Naive thymus-derived CD4-positive, alpha-beta T cell (primary cell): ENCODE measurements at regions of chr3 and their contacts with region 1.

Region 1: DNA sequence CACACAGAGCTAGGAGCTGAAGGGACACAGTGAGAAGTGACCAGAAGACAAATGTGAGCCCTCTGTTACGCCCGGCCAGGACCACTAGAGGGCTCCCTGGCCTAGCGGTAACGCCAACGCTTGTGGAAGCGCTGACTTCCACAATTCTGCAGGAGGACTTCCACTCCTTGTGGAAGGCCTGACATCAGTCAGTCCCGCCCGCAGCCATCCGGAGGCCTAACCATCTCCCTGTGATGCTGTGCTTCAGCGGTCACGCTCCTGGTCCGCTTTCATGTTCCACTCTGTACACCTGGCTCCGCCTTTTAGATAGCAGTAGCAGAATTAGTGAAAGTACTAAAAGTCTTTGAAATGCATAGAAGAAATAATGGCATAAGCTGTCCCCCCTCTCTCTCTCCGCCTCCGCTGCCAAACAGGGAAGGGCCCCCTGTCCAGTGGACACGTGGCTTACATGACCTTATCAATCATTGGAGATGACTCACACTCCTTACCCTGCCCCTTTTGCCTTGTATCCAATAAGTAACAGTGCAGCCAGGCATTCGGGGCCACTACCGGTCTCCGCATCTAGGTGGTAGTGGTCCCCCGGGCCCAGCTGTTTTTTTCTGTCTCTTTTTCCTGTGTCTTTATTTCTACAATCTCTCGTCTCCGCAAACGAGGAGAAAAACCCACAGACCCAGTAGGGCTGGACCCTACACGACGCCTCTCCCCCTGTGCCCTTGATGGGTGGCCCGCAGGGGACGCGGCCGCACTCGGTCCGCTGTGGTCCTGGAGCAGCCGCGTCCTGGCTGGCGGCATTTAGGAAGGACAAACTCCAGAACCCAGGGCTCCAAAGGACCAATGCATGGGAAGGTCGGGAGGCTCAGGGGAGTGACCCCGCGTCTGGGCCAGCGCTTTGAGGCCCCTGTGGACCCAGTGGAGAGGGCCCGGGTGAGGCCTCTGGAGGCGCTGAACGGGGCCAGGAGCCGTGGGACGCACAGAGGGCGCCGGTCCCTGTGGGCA is 27.0 kb upstream of the RPL32 start:
- DNase-seq: peak; percentile 32 to 68 (median 50)
- ATAC-seq: peak; percentile 87
- H3K4me3 ChIP-seq: peak overlapping the region; percentile 60
- H3K4me3 Mint-ChIP-seq: peak overlapping the region; percentile 79 to 92 (median 86)
- H3K27ac ChIP-seq: no peak overlapping the region
- H3K27ac Mint-ChIP-seq: peak overlapping the region in 2 of 9 donors; percentile 4 to 53
- H3K4me1 ChIP-seq: no peaks in the 10 kb centered on the region
- H3K4me1 Mint-ChIP-seq: peaks cover 0 to 14% (median 10%) of the 10 kb centered on the region in 7 donors
- H3K27me3 ChIP-seq: peaks cover 0 to 5% of the 10 kb centered on the region in 2 donors
- H3K27me3 Mint-ChIP-seq: peaks cover 9 to 35% (median 14%) of the 10 kb centered on the region in 5 donors

Region 2: GRCh38 chr3:12601072-12601471 is 267.3 kb before region 1 on chr3:
- CTCF ChIA-PET with region 1: no interaction called
- POLR2A ChIA-PET with region 1: no interaction called
- intact Hi-C with region 1: no loop called
- DNase-seq: no peak
- ATAC-seq: no peak
- H3K4me3 ChIP-seq: no peak overlapping the region
- H3K4me3 Mint-ChIP-seq: no peak overlapping the region
- H3K27ac ChIP-seq: no peak overlapping the region
- H3K27ac Mint-ChIP-seq: peak overlapping the region in 2 of 9 donors; percentile 26 to 31
- H3K4me1 ChIP-seq: no peaks in the 10 kb centered on the region
- H3K4me1 Mint-ChIP-seq: no peaks in the 10 kb centered on the region
- H3K27me3 ChIP-seq: no peaks in the 10 kb centered on the region
- H3K27me3 Mint-ChIP-seq: no peaks in the 10 kb centered on the region

Region 3: DNA sequence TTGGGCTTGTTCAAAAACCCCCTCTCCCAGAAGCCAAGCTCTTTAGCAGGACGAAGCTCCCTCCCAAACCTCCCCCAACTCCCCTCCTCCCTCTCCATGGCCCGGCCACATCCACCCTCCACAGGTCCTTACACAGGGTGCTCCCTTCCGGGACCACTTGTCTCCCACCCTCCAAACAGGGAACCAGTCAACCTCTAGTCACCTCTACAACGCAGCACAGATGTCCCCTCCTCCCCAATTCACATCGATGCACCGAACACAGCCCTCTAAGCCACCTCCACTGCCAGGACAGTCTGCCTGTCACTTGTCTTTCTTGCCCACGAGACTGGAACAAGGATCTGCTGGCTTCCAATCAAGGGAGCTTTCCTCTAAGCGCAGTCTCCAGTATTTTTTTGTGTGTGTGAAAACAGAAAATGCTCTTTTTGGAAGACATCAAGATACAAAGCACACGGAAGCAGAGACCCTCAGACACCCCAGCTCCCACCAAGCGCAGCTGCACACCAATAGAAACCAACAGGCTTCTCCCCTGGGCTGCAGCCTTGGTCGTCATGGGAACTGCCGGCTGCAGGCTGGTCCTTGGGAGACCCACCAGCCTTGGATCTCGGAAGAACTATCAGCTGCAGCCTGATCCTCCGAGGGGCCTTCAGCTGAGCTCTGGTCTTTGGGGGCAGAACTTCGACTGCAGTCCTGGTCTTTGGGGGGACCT is 178.4 kb after region 1 on chr3:
- CTCF ChIA-PET with region 1: no interaction called
- POLR2A ChIA-PET with region 1: no interaction called
- intact Hi-C with region 1: loop called in 1 of 2 experiments (anchors 1 kb)
- DNase-seq: no peak
- ATAC-seq: peak; percentile 16
- H3K4me3 ChIP-seq: no peak overlapping the region
- H3K4me3 Mint-ChIP-seq: peak overlapping the region in 2 of 10 donors; percentile 32 to 41
- H3K27ac ChIP-seq: no peak overlapping the region
- H3K27ac Mint-ChIP-seq: peak overlapping the region in 7 of 9 donors; percentile 2 to 76 (median 51)
- H3K4me1 ChIP-seq: peaks cover 0 to 8% of the 10 kb centered on the region in 2 donors
- H3K4me1 Mint-ChIP-seq: peaks cover 11 to 22% (median 13%) of the 10 kb centered on the region in 7 donors
- H3K27me3 ChIP-seq: no peaks in the 10 kb centered on the region
- H3K27me3 Mint-ChIP-seq: no peaks in the 10 kb centered on the region